Common myeloid progenitor, CD34-positive (primary cell): ENCODE measurements at regions of chr17 and their contacts with region 1.

Region 1: GRCh38 chr17:5584383-5585286 is at the start of gene NLRP1:
- DNase-seq: peak; percentile 93 to 97 (median 96)
- H3K4me3 ChIP-seq: peak within 1 kb of the TSS; percentile 33 to 85 (median 71)
- H3K27ac ChIP-seq: peak within 1 kb of the TSS; percentile 59 to 78
- H3K4me1 ChIP-seq: peaks cover 17 to 72% (median 61%) of the 10 kb centered on the region in 4 experiments
- H3K27me3 ChIP-seq: no peaks in the 10 kb centered on the region

Region 2: GRCh38 chr17:5486204-5487124 is 98.2 kb before region 1 on chr17 and contains the start of gene MIS12:
- CTCF ChIA-PET with region 1: interaction called, 3 read pairs
- POLR2A ChIA-PET with region 1: interaction called, 11 read pairs
- DNase-seq: peak; percentile 99 to 100 (median 100)
- H3K4me3 ChIP-seq: peak within 1 kb of the TSS; percentile 58 to 99 (median 97)
- H3K27ac ChIP-seq: peak within 1 kb of the TSS; percentile 97 to 98
- H3K4me1 ChIP-seq: peaks cover 10 to 29% (median 20%) of the 10 kb centered on the region in 4 experiments
- H3K27me3 ChIP-seq: no peaks in the 10 kb centered on the region

Region 3: GRCh38 chr17:5571281-5571680 is 13.4 kb before region 1 on chr17:
- CTCF ChIA-PET with region 1: no interaction called
- POLR2A ChIA-PET with region 1: no interaction called
- DNase-seq: no peak
- H3K4me3 ChIP-seq: no peak overlapping the region
- H3K27ac ChIP-seq: no peak overlapping the region
- H3K4me1 ChIP-seq: no peaks in the 10 kb centered on the region
- H3K27me3 ChIP-seq: no peaks in the 10 kb centered on the region

Region 4: DNA sequence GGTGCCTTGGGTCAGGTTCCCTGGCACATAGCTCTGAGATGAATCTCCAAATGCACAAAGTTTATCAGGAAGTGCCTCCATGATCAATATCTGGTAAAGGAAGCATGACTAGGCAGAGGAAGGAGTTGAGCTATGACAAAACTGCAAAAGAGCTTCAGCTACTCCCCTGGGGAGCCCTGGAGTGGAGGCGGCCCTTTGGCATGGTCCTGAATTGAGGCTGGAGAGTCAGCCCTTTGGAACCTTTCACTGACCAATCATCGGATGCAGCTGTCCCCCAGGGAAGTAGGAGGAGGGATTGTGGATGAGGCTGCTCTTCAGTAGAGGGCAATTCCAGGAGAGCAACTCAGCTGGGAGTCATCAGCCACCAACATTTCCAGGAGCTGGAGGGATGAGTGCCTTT is 45.8 kb after region 1 on chr17:
- CTCF ChIA-PET with region 1: no interaction called
- POLR2A ChIA-PET with region 1: no interaction called
- DNase-seq: no peak
- H3K4me3 ChIP-seq: no peak overlapping the region
- H3K27ac ChIP-seq: no peak overlapping the region
- H3K4me1 ChIP-seq: no peaks in the 10 kb centered on the region
- H3K27me3 ChIP-seq: peaks cover 0 to 15% (median 2%) of the 10 kb centered on the region in 5 experiments

Region 5: DNA sequence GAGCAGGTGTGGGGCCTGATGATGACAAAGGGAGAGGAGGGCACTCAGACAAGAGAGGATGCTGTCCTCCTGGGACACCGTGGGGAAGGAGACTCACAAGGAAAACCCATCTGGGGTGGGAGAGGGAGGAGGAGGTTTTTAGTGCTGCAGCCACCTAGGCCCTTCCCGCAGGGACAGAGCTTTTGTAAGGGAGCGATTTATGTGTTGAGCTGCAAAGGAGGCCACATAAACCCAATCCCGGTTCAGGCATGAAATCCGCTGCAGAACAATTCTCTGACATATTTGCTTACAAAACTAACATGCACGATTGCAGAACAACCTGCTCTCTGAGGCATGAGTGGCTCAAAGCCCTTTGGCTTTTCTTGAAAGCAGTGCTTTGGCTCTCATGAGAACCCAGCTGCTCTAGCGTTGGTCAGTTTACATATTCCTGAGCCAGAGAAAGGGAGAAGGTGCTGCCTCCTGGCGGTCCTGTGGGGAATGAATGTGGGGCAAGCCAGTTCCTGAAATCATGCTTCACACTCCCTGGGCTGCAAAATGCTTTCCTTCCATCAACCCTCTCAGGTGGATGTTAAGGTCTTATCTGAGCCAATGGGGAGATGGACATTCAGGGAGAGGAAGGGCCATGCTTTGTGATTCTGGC is 122.1 kb after region 1 on chr17:
- CTCF ChIA-PET with region 1: interaction called, 52 read pairs
- POLR2A ChIA-PET with region 1: no interaction called
- DNase-seq: peak; percentile 44 to 75 (median 65)
- H3K4me3 ChIP-seq: no peak overlapping the region
- H3K27ac ChIP-seq: no peak overlapping the region
- H3K4me1 ChIP-seq: no peaks in the 10 kb centered on the region
- H3K27me3 ChIP-seq: peaks cover 2 to 17% (median 3%) of the 10 kb centered on the region in 5 experiments